Activated CD4-positive, alpha-beta T cell treated with anti-CD3 and anti-CD28 coated beads for 36 hours (primary cell): ENCODE measurements at regions of chr3 and their contacts with region 1.

Region 1: DNA sequence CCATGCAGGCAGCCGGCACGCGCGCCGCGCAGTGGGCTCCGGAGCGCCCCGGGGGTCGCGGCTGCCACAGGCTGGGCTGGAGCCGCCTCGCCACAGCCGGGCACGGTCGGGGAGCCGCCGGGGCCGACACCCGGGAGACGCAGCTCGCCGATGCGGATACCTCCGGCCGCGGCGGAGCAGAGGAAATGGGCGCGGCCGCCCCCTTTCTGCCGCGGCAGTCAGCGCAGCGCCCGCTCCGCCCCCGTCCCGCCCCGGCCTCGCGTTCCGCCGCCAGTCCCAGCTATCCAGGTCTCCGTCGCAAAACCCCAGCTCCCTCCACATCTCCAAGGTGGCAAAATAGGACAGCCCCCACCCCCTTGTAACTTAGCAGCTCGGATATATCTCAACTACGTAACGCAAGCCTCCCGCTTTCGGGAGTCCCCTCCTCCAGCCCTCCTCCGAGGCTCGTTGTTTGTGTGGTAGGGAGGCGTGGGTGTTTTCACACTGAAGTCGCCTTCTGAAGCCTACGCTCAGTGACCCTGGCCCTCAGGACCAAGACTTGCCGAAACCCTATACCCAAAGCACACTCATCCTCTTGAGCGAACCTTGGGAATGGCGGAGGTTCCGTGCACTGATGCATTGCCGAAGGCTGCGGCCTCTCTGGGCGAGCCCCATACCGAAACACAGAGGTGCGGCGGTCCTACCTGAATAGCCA is at the start of gene SH3BP5:
- DNase-seq: peak; percentile 86
- ATAC-seq: peak; percentile 89
- H3K4me3 Mint-ChIP-seq: peak within 1 kb of the TSS; percentile 85
- H3K27ac Mint-ChIP-seq: peak within 1 kb of the TSS; percentile 83
- H3K4me1 Mint-ChIP-seq: peaks cover 53% of the 10 kb centered on the region
- H3K27me3 Mint-ChIP-seq: peaks cover 2% of the 10 kb centered on the region
- total RNA-seq, gene SH3BP5: 8.9 to 9.4 TPM

Region 2: DNA sequence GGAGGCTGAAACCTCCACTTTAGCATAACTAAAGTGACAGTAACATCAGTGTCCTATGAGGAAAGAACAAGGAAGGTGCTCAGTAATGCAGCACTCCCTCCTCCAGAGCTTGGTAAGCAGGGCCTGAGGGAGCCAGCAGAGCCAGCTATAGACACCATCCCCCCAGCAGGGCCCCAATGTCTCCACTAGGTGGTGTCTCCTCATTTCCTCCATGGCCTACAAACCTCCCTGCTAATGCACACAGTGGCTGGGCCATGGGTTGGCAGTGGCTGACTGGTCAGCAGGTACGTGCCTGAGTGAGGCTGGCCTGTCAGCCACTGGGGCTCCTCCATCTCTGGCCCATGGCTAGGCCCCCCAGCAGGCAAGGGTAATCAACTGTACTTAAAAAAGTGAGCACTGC is 281.0 kb before region 1 on chr3:
- CTCF ChIA-PET with region 1: no interaction called
- POLR2A ChIA-PET with region 1: no interaction called
- intact Hi-C with region 1: no loop called
- DNase-seq: peak; percentile 67
- ATAC-seq: peak; percentile 81
- H3K4me3 Mint-ChIP-seq: no peak overlapping the region
- H3K27ac Mint-ChIP-seq: peak overlapping the region; percentile 9
- H3K4me1 Mint-ChIP-seq: peaks cover 30% of the 10 kb centered on the region
- H3K27me3 Mint-ChIP-seq: no peaks in the 10 kb centered on the region

Region 3: DNA sequence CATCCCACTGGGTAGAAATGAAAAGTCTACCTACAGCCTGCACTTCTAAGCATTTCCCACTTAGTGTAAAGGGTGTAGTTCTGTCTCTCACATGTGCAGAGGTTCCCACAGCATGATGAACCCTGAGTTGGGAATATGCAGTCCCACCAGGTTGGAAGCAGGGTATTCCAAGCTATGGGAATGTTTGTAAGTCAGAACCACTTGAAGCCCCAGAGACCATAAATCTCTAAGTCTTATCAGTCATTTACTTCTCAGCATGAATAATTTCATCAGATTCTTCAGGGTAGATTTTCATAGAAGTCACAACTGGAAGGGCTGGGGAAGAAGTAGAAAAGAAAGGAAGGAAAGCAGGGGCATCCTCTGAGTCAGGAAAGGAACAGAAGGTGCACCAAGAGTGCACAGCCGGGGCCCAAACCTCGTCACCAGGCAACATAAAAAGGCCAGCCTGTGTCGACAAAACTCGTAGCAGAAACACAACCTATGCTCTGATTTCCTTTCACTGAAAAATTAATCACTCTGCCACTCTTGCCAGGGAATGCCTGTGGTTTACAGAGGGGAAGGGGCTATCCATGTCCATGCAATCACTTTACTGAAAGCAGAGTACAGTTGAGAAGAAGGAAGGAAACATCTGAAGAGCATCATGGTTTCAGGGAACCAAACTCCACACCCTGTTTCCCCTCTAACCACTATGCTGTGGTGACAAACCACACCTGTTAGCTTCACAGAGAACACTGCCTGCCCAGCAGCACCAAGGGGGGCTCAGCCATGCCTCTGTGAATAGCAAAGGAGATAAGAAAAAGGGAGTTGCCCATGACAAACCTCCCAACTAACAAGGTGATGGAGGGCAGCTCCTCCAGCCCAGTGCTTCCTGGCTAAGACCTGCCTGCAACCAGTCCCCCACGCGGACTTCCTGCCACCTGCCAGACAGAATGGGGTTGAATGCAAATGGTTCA is 40.7 kb before region 1 on chr3:
- CTCF ChIA-PET with region 1: interaction called, 5 read pairs
- POLR2A ChIA-PET with region 1: no interaction called
- intact Hi-C with region 1: loop called in 1 of 2 experiments (anchors 1 kb)
- DNase-seq: peak; percentile 77
- ATAC-seq: peak; percentile 82
- H3K4me3 Mint-ChIP-seq: no peak overlapping the region
- H3K27ac Mint-ChIP-seq: peak overlapping the region; percentile 70
- H3K4me1 Mint-ChIP-seq: peaks cover 68% of the 10 kb centered on the region
- H3K27me3 Mint-ChIP-seq: no peaks in the 10 kb centered on the region

Region 4: GRCh38 chr3:15319575-15319974 is 13.0 kb before region 1 on chr3:
- CTCF ChIA-PET with region 1: interaction called, 24 read pairs
- POLR2A ChIA-PET with region 1: interaction called, 4 read pairs
- intact Hi-C with region 1: no loop called
- DNase-seq: no peak
- ATAC-seq: no peak
- H3K4me3 Mint-ChIP-seq: no peak overlapping the region
- H3K27ac Mint-ChIP-seq: peak overlapping the region; percentile 44
- H3K4me1 Mint-ChIP-seq: peaks cover 74% of the 10 kb centered on the region
- H3K27me3 Mint-ChIP-seq: no peaks in the 10 kb centered on the region

Region 5: DNA sequence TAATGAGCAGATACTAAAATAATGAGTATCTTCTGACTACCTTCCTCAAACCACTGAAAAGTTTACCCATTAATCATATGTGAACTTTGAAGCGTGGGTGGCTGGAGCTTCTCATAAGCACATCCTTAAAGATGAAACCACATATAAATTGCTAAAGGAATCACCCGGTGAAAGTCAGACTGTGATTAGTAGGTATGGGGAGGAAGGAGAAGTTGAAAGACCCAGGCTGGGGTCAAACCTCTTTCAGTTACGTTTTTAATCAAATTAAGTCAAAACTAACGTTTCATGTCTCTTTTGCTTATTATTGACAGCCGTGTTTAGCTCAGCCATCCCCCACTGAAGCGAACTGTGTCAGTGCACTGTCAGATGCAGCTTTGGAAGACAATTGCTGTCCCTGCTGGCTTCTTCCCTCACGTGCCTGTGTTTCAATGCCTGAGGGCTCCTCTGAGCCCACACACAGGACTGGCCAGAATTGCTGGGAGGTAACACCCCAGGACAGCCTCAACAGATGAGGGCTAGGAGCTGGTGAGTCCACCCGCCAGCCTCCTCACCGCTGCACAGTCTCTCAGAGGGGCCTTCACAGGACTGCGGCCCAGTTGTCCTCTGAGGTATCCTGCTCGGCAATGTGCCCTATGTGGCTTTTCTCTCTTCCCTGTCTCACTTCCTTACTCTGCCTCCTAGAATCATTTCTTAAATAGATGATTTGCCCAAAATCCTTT is 29.1 kb after region 1 on chr3:
- CTCF ChIA-PET with region 1: interaction called, 9 read pairs
- POLR2A ChIA-PET with region 1: interaction called, 4 read pairs
- intact Hi-C with region 1: loop called (anchors 1 kb)
- DNase-seq: peak; percentile 83
- ATAC-seq: peak; percentile 76
- H3K4me3 Mint-ChIP-seq: peak overlapping the region; percentile 53
- H3K27ac Mint-ChIP-seq: peak overlapping the region; percentile 87
- H3K4me1 Mint-ChIP-seq: peaks cover 38% of the 10 kb centered on the region
- H3K27me3 Mint-ChIP-seq: peaks cover 2% of the 10 kb centered on the region

Region 6: DNA sequence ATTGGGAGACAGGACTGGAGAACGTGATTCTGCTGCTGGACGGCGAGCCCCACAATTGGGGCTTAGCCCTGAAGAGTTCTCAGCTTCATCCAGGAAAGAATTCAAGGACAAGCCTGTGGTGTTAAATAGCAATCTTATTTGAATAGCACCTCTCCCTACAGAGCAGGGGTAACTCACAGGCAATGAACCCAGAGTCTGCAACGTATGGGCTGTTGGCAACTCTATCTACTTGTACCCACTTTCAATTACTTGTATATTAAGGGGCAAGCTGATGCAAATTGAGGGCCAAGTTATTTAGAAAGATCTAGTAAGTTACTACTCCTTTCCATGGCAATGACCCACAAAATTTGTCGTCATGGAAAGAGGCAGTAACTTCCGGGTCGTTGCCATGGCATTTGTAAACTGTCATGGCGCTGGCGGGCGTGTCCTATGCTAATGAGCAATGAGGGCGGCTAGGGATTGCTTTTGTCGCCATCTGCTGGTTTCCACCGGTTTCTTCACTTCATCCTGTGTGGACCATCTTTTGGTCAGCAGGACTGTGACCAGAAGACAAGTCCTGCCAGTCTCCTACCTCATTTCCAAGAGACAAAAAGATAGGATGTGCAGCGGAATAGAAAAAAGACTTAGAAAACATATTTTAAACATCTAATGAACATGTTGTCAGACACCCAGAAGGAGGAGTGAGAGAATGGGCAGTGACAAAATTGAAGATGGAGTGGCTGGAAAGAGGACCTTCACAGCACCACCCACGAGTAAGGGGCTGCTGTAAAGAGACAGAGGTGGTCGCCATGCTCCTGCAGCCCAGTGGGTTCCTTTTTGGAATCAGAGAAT is 45.6 kb after region 1 on chr3:
- CTCF ChIA-PET with region 1: interaction called, 4 read pairs
- POLR2A ChIA-PET with region 1: no interaction called
- intact Hi-C with region 1: loop called (anchors 1 to 2 kb)
- DNase-seq: peak; percentile 96
- ATAC-seq: peak; percentile 96
- H3K4me3 Mint-ChIP-seq: no peak overlapping the region
- H3K27ac Mint-ChIP-seq: peak overlapping the region; percentile 73
- H3K4me1 Mint-ChIP-seq: peaks cover 6% of the 10 kb centered on the region
- H3K27me3 Mint-ChIP-seq: no peaks in the 10 kb centered on the region